Heart left ventricle (tissue), 16 donors: ENCODE measurements at regions of chr22 and their contacts with region 1.

Region 1: GRCh38 chr22:20568989-20569769 is 61.8 kb downstream of the MED15 start:
- DNase-seq: peak in 4 of 5 donors; percentile 35 to 82 (median 73)
- ATAC-seq: peak; percentile 75 to 87 (median 83)
- H3K4me3 ChIP-seq: no peak overlapping the region
- H3K27ac ChIP-seq: peak overlapping the region in 9 of 12 donors; percentile 7 to 74 (median 38)
- H3K4me1 ChIP-seq: peaks cover 0 to 73% (median 24%) of the 10 kb centered on the region in 12 donors
- H3K27me3 ChIP-seq: no peaks in the 10 kb centered on the region
- CTCF ChIP-seq: no peak
- POLR2A ChIP-seq: no peak

Region 2: GRCh38 chr22:20418211-20418788 is 150.9 kb before region 1 on chr22:
- intact Hi-C with region 1: loop called in 3 of 10 experiments (anchors 10 kb)
- DNase-seq: peak; percentile 83 to 91 (median 85)
- ATAC-seq: peak; percentile 80 to 92 (median 90)
- H3K4me3 ChIP-seq: peak overlapping the region in 9 of 12 donors; percentile 22 to 55 (median 46)
- H3K27ac ChIP-seq: peak overlapping the region in 1 of 12 donors; percentile 71
- H3K4me1 ChIP-seq: peaks cover 0 to 15% (median 9%) of the 10 kb centered on the region in 12 donors
- H3K27me3 ChIP-seq: no peaks in the 10 kb centered on the region
- CTCF ChIP-seq: peak; percentile 81 to 98 (median 88)
- POLR2A ChIP-seq: no peak

Region 3: DNA sequence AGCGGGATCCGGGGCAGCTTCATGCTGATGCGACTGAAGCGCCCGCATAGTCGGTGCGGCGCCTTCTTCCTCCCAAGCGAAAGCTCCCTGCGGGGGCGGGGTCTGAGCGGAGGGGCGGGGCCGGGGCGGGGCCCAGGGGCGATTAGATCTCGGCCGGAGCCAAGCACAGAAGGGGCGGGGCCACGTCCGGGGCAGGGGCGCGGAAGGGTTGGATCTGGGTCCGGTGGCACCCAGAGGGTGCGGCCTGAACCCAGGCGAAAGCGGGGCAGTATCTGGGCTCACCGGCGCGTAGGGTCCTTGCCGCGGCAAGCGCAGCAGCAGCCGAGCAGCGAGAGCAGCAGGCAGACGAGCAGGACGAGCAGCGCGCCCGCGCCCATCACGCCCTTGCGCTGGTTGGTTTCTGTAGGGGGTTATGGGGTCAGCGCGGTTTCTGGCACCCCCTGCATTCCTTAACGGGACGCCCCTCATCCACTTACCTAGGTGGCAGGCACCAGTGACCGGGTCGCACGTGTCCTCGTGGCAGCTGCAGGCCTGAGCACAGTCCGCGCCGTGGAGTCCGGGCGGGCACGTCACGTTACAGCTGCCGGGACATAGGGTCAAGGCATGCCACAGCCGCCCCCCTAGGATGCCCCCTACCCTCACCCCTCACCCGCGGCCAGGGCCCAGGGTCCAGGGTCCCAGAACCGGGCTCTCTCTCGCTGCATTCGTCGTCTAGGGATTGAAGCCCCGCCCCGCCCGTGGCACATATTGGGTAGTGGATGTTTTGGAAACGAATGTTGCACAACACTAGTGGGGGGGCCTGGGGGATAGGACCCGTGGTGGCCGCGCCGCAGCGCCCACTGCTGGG is 139.7 kb before region 1 on chr22:
- intact Hi-C with region 1: loop called in 1 of 10 experiments (anchors 10 kb)
- DNase-seq: peak in 2 of 5 donors; percentile 48 to 87
- ATAC-seq: peak in 3 of 4 donors; percentile 18 to 33 (median 32)
- H3K4me3 ChIP-seq: peak overlapping the region in 8 of 12 donors; percentile 16 to 62 (median 32)
- H3K27ac ChIP-seq: no peak overlapping the region
- H3K4me1 ChIP-seq: peaks cover 0 to 37% (median 9%) of the 10 kb centered on the region in 12 donors
- H3K27me3 ChIP-seq: peaks cover 0 to 50% (median 0%) of the 10 kb centered on the region in 9 donors
- CTCF ChIP-seq: no peak
- POLR2A ChIP-seq: no peak

Region 4: DNA sequence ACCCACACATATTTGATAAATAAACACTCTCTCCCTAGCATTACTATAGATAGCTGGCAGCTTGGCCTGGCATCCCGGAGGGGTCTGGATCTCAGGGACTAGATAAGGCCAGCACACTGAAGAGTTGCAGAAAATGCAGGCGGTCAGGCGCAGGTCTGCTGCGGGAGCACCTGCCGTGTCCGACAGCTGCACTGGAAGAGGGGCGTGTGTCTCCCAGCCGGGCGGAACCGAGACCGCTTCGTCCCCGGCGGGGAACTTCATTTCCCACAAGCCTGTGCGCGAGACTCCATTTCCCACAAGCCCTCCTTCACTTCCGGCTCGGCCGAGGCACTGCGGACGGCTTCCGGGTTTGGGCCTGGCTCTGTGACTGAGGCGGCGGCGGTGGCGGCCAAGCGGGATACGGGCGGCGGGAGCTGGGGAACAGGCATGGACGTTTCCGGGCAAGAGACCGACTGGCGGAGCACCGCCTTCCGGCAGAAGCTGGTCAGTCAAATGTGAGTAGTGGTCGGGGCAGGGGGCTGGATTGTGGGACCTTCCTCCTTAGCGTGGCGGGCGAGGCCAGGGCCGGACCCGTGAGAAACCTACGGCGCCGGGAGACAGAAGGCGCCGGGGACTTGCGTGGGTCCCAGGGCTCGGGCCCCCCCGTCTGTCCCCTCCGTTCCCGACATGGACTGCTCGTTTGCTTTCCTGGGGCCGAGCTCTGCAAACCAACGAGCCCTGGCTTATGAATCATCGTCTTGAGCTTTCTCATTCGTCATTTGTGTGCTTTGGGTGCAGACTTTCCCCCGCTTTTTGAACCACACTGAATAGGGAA is 61.7 kb before region 1 on chr22 and contains the start of gene MED15:
- intact Hi-C with region 1: loop called in 4 of 10 experiments (anchors 5 kb)
- DNase-seq: peak; percentile 92 to 95 (median 93)
- ATAC-seq: peak; percentile 90 to 94 (median 94)
- H3K4me3 ChIP-seq: peak within 1 kb of the TSS; percentile 58 to 97 (median 82)
- H3K27ac ChIP-seq: peak within 1 kb of the TSS; percentile 77 to 97 (median 94)
- H3K4me1 ChIP-seq: peaks cover 0 to 48% (median 37%) of the 10 kb centered on the region in 12 donors
- H3K27me3 ChIP-seq: no peaks in the 10 kb centered on the region
- CTCF ChIP-seq: no peak
- POLR2A ChIP-seq: peak; percentile 37 to 82
- total RNA-seq, gene MED15: 27.9 to 78.3 (median 43.0) TPM

Region 5: GRCh38 chr22:20606041-20606783 is 37.0 kb after region 1 on chr22:
- intact Hi-C with region 1: no loop called
- DNase-seq: peak in 1 of 5 donors; percentile 51
- ATAC-seq: peak in 3 of 4 donors; percentile 57 to 66 (median 57)
- H3K4me3 ChIP-seq: no peak overlapping the region
- H3K27ac ChIP-seq: no peak overlapping the region
- H3K4me1 ChIP-seq: peaks cover 0 to 4% (median 0%) of the 10 kb centered on the region in 12 donors
- H3K27me3 ChIP-seq: peaks cover 0 to 16% (median 0%) of the 10 kb centered on the region in 9 donors
- CTCF ChIP-seq: peak; percentile 39 to 65 (median 54)
- POLR2A ChIP-seq: no peak

Region 6: GRCh38 chr22:20624161-20624616 is 55.0 kb after region 1 on chr22:
- intact Hi-C with region 1: loop called in 1 of 10 experiments (anchors 10 kb)
- DNase-seq: no peak
- ATAC-seq: no peak
- H3K4me3 ChIP-seq: no peak overlapping the region
- H3K27ac ChIP-seq: no peak overlapping the region
- H3K4me1 ChIP-seq: no peaks in the 10 kb centered on the region
- H3K27me3 ChIP-seq: no peaks in the 10 kb centered on the region
- CTCF ChIP-seq: no peak
- POLR2A ChIP-seq: no peak